Mammary epithelial cell (primary cell): ENCODE measurements at regions of chr9 and their contacts with region 1.

Region 1: DNA sequence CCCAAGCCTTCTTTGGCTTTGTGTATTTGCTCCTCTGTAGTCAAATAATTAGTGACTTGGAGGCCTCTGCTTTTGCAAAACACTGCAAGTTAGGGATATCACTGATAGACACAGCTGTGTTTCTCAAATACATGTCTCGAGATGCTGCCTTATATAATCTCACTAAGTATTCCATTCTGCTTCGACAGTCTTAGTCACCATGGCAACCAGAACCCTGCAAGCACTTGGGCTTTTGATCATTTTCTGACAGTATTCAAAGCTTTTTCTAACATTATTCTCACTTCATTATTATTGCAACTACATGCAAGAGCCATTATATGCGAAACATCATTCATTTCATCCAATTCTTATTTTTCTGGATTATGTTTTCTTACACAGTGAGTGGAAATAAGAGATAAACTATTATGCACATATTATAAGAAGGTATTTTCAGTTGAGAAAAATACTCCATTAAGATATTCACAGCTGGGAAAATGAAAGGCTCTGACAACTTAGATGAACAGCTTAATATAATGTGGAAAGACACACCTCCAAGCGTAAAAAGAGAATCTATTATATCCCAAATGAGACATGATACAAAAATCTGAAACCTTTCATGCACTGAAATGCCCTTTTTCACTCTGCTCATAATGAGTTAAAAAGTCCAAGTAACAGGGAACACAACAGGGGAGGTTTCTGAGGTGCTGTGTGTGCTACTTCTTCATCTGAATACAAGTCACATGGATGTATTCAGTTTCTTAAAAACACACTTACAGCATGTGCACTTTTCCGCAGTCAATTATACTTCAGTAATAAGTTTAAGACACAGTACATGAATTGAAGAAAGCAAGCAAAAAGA is 93.9 kb downstream of the SCAI start:
- DNase-seq: peak; percentile 6
- H3K4me3 ChIP-seq: no peak overlapping the region
- H3K27ac ChIP-seq: no peak overlapping the region
- H3K4me1 ChIP-seq: no peaks in the 10 kb centered on the region
- H3K27me3 ChIP-seq: no peaks in the 10 kb centered on the region
- CTCF ChIP-seq: no peak

Region 2: DNA sequence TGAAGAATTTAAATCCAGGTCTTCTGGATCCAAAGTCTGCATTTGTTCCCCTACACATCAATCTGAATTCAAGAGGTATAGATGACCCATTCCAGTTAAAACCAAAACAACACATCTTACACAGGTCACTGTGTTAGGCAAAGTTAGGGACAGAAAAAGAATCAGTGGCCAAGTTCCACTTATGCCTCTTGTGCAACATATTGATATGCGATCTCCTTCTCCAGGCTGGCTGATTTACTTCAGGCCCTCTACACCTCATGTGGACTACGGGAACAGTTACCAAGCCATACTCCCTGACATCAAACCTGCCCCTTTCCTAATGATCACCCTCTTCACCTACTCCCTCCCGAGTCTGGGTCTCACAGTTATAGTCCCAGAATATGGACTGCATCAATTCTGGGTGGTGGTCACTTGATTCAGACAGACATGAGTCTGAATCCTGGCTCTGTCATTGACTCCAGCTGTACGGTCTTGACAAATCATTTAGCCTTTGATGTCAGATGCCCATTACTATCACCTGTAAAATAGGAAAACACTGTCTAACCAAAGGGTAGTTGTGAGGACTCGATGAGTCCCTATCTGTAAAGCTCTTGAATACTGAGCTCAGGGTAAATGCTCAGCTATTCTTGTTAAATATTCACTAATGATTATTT is 134.6 kb before region 1 on chr9:
- CTCF ChIA-PET with region 1: no interaction called
- dilution Hi-C with region 1: loop called (anchors 10 kb)
- in situ Hi-C with region 1: no loop called
- intact Hi-C with region 1: no loop called
- DNase-seq: no peak
- H3K4me3 ChIP-seq: no peak overlapping the region
- H3K27ac ChIP-seq: no peak overlapping the region
- H3K4me1 ChIP-seq: no peaks in the 10 kb centered on the region
- H3K27me3 ChIP-seq: no peaks in the 10 kb centered on the region
- CTCF ChIP-seq: no peak

Region 3: GRCh38 chr9:124934290-124934689 is 115.1 kb before region 1 on chr9:
- CTCF ChIA-PET with region 1: no interaction called
- dilution Hi-C with region 1: no loop called
- in situ Hi-C with region 1: no loop called
- intact Hi-C with region 1: no loop called
- DNase-seq: no peak
- H3K4me3 ChIP-seq: no peak overlapping the region
- H3K27ac ChIP-seq: no peak overlapping the region
- H3K4me1 ChIP-seq: no peaks in the 10 kb centered on the region
- H3K27me3 ChIP-seq: no peaks in the 10 kb centered on the region
- CTCF ChIP-seq: no peak

Region 4: DNA sequence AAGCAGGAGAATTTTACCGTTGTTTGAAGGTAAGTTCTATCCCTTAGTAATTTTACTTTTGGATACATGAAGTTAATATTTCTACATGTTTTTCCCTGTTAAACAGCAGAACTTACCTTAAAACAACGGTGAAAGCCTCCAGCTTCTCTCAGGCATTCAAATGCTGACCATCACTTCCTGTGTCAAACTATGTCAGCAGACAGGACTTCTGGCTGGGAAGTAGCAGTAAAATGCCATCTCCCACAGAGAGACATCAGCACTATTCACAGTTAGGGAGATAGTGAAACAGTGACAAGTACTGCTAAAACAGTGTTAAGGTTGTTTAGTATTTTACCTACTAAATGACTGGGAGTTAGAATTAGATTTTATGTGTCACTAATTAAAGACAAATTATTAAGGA is 74.3 kb before region 1 on chr9:
- CTCF ChIA-PET with region 1: no interaction called
- dilution Hi-C with region 1: loop called (anchors 5 kb)
- in situ Hi-C with region 1: no loop called
- intact Hi-C with region 1: no loop called
- DNase-seq: no peak
- H3K4me3 ChIP-seq: no peak overlapping the region
- H3K27ac ChIP-seq: no peak overlapping the region
- H3K4me1 ChIP-seq: no peaks in the 10 kb centered on the region
- H3K27me3 ChIP-seq: no peaks in the 10 kb centered on the region
- CTCF ChIP-seq: no peak

Region 5: GRCh38 chr9:125513668-125514413 is 464.4 kb after region 1 on chr9:
- CTCF ChIA-PET with region 1: no interaction called
- dilution Hi-C with region 1: no loop called
- in situ Hi-C with region 1: no loop called
- intact Hi-C with region 1: no loop called
- DNase-seq: peak; percentile 91
- H3K4me3 ChIP-seq: peak overlapping the region; percentile 17 to 33 (median 22)
- H3K27ac ChIP-seq: peak overlapping the region; percentile 88
- H3K4me1 ChIP-seq: peaks cover 33% of the 10 kb centered on the region
- H3K27me3 ChIP-seq: no peaks in the 10 kb centered on the region
- CTCF ChIP-seq: peak in 1 of 2 donors; percentile 0